CD4-positive, alpha-beta T cell (primary cell): ENCODE measurements at regions of chr14 and their contacts with region 1.

Region 1: GRCh38 chr14:76876076-76876475 is 49.9 kb downstream of the LRRC74A start:
- DNase-seq: peak in 13 of 14 experiments; percentile 22 to 73 (median 35)
- ATAC-seq: peak; percentile 64
- H3K4me3 ChIP-seq: no peak overlapping the region
- H3K4me3 Mint-ChIP-seq: no peak overlapping the region
- H3K27ac ChIP-seq: no peak overlapping the region
- H3K27ac Mint-ChIP-seq: no peak overlapping the region
- H3K4me1 ChIP-seq: peaks cover 3% of the 10 kb centered on the region
- H3K4me1 Mint-ChIP-seq: peaks cover 4% of the 10 kb centered on the region
- H3K27me3 ChIP-seq: no peaks in the 10 kb centered on the region
- H3K27me3 Mint-ChIP-seq: no peaks in the 10 kb centered on the region
- CTCF ChIP-seq: peak; percentile 87

Region 2: GRCh38 chr14:76855066-76855465 is 21.0 kb before region 1 on chr14:
- CTCF ChIA-PET with region 1: no interaction called
- POLR2A ChIA-PET with region 1: no interaction called
- intact Hi-C with region 1: no loop called
- DNase-seq: no peak
- ATAC-seq: no peak
- H3K4me3 ChIP-seq: no peak overlapping the region
- H3K4me3 Mint-ChIP-seq: no peak overlapping the region
- H3K27ac ChIP-seq: no peak overlapping the region
- H3K27ac Mint-ChIP-seq: no peak overlapping the region
- H3K4me1 ChIP-seq: no peaks in the 10 kb centered on the region
- H3K4me1 Mint-ChIP-seq: no peaks in the 10 kb centered on the region
- H3K27me3 ChIP-seq: peaks cover 0 to 5% of the 10 kb centered on the region in 2 experiments
- H3K27me3 Mint-ChIP-seq: peaks cover 10% of the 10 kb centered on the region
- CTCF ChIP-seq: no peak

Region 3: GRCh38 chr14:77053046-77053841 is 177.2 kb after region 1 on chr14:
- CTCF ChIA-PET with region 1: interaction called, 9 read pairs
- POLR2A ChIA-PET with region 1: no interaction called
- intact Hi-C with region 1: loop called (anchors 1 kb)
- DNase-seq: peak; percentile 62 to 90 (median 72)
- ATAC-seq: peak; percentile 87
- H3K4me3 ChIP-seq: no peak overlapping the region
- H3K4me3 Mint-ChIP-seq: no peak overlapping the region
- H3K27ac ChIP-seq: no peak overlapping the region
- H3K27ac Mint-ChIP-seq: no peak overlapping the region
- H3K4me1 ChIP-seq: peaks cover 28% of the 10 kb centered on the region
- H3K4me1 Mint-ChIP-seq: peaks cover 18% of the 10 kb centered on the region
- H3K27me3 ChIP-seq: no peaks in the 10 kb centered on the region
- H3K27me3 Mint-ChIP-seq: no peaks in the 10 kb centered on the region
- CTCF ChIP-seq: peak; percentile 95

Region 4: DNA sequence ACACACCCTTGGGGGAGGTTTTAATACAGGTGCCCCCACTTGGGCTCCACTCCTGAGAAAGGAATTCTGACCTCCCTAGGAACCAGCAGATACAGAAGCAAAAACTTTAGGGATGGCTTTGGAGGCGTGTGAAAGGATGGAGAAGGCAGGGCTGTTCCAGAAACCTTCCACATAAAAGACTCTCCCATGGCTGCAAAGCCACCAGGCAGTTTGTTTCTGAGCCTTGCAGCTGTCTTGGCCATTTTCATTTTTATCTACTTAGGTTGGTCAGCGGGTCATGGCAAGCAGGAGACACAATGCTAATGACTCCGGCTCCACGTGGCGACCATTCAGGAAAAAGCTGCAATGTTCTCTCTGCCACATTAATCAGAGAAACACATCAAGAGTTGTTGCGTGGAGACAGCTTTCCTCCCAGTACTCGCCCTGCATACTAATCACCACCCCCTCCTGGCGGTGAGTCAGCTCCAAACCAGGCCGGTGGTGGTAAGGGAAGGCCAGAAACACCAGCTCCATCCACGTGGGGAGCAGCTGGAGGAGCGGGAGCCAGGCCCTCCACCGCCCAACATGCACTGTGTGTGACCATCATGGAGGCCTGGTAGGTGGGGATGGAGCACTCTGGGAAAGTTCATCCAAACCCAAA is 183.3 kb after region 1 on chr14:
- CTCF ChIA-PET with region 1: interaction called, 11 read pairs
- POLR2A ChIA-PET with region 1: no interaction called
- intact Hi-C with region 1: no loop called
- DNase-seq: peak in 5 of 14 experiments; percentile 26 to 64 (median 39)
- ATAC-seq: peak; percentile 41
- H3K4me3 ChIP-seq: no peak overlapping the region
- H3K4me3 Mint-ChIP-seq: no peak overlapping the region
- H3K27ac ChIP-seq: no peak overlapping the region
- H3K27ac Mint-ChIP-seq: no peak overlapping the region
- H3K4me1 ChIP-seq: peaks cover 22% of the 10 kb centered on the region
- H3K4me1 Mint-ChIP-seq: peaks cover 10% of the 10 kb centered on the region
- H3K27me3 ChIP-seq: no peaks in the 10 kb centered on the region
- H3K27me3 Mint-ChIP-seq: no peaks in the 10 kb centered on the region
- CTCF ChIP-seq: no peak

Region 5: DNA sequence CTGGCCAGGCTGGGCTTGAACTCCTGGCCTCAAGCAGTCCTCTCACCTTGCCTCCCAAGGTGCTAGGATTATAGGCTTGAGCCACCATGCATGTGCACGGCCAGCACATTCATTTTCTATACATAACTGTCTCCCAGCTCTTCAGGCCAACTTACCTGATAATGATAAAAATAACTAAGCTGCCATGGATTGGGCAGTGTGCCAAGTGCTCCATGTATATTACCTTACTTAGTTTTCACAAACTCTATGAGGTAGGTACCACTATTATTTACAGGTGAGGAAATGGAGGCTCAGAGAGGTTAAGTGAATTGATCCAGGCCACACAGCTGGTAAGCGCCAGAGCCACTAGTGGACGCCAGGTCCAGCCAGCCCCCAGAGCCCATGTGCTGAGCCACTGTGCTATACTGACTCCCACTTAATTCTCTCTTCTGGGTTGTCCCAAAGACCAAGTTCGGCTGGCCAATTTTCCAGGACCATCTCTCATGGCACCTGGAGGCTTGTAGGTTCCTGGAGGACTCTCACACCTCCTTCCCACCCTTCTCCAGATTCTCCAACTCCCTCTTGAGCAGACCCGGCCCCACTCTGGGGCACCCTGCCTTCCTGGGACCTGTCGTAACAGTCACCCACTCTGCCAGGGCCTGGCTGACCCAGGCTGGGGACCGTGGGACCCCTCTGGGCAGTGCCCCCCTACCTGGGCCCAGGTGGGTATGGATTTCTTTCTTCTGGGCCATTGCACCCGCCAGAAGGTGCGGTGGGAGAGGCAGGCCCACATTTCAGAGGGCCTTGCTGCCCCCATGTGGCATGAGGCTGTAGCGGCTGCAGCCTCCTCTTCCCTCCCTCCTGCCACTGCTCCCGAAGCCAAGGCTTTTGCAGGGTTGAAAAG is 191.8 kb after region 1 on chr14:
- CTCF ChIA-PET with region 1: interaction called, 38 read pairs
- POLR2A ChIA-PET with region 1: interaction called, 14 read pairs
- intact Hi-C with region 1: loop called (anchors 1 kb)
- DNase-seq: peak; percentile 33 to 77 (median 54)
- ATAC-seq: peak; percentile 72
- H3K4me3 ChIP-seq: no peak overlapping the region
- H3K4me3 Mint-ChIP-seq: no peak overlapping the region
- H3K27ac ChIP-seq: no peak overlapping the region
- H3K27ac Mint-ChIP-seq: no peak overlapping the region
- H3K4me1 ChIP-seq: peaks cover 14% of the 10 kb centered on the region
- H3K4me1 Mint-ChIP-seq: no peaks in the 10 kb centered on the region
- H3K27me3 ChIP-seq: no peaks in the 10 kb centered on the region
- H3K27me3 Mint-ChIP-seq: peaks cover 4% of the 10 kb centered on the region
- CTCF ChIP-seq: peak; percentile 76

Region 6: GRCh38 chr14:77314043-77314442 is 438.0 kb after region 1 on chr14:
- CTCF ChIA-PET with region 1: interaction called, 5 read pairs
- POLR2A ChIA-PET with region 1: no interaction called
- intact Hi-C with region 1: loop called (anchors 2 to 5 kb)
- DNase-seq: no peak
- ATAC-seq: no peak
- H3K4me3 ChIP-seq: no peak overlapping the region
- H3K4me3 Mint-ChIP-seq: no peak overlapping the region
- H3K27ac ChIP-seq: no peak overlapping the region
- H3K27ac Mint-ChIP-seq: no peak overlapping the region
- H3K4me1 ChIP-seq: peaks cover 7% of the 10 kb centered on the region
- H3K4me1 Mint-ChIP-seq: peaks cover 5% of the 10 kb centered on the region
- H3K27me3 ChIP-seq: no peaks in the 10 kb centered on the region
- H3K27me3 Mint-ChIP-seq: no peaks in the 10 kb centered on the region
- CTCF ChIP-seq: no peak